ENCODE measurements at regions of chr16 and their contacts with region 1.

Region 1: GRCh38 chr16:10918294-10919002 is 23.8 kb downstream of the DEXI start:
- DNase-seq: peak; percentile 94
- H3K4me3 Mint-ChIP-seq: no peak overlapping the region
- H3K27ac Mint-ChIP-seq: no peak overlapping the region
- H3K4me1 Mint-ChIP-seq: peaks cover 11% of the 10 kb centered on the region
- H3K27me3 Mint-ChIP-seq: no peaks in the 10 kb centered on the region

Region 2: GRCh38 chr16:10509534-10510025 is 408.9 kb before region 1 on chr16:
- CTCF ChIA-PET with region 1: interaction called, 5 read pairs
- intact Hi-C with region 1: loop called (anchors 1 kb)
- DNase-seq: peak; percentile 78
- H3K4me3 Mint-ChIP-seq: no peak overlapping the region
- H3K27ac Mint-ChIP-seq: no peak overlapping the region
- H3K4me1 Mint-ChIP-seq: peaks cover 15% of the 10 kb centered on the region
- H3K27me3 Mint-ChIP-seq: no peaks in the 10 kb centered on the region

Region 3: GRCh38 chr16:10668322-10669045 is 250.0 kb before region 1 on chr16:
- CTCF ChIA-PET with region 1: no interaction called
- intact Hi-C with region 1: loop called (anchors 1 kb)
- DNase-seq: peak; percentile 20
- H3K4me3 Mint-ChIP-seq: no peak overlapping the region
- H3K27ac Mint-ChIP-seq: no peak overlapping the region
- H3K4me1 Mint-ChIP-seq: no peaks in the 10 kb centered on the region
- H3K27me3 Mint-ChIP-seq: no peaks in the 10 kb centered on the region

Region 4: GRCh38 chr16:10743610-10744393 is 174.6 kb before region 1 on chr16 and contains the start of gene NUBP1:
- CTCF ChIA-PET with region 1: interaction called, 11 read pairs
- intact Hi-C with region 1: loop called (anchors 2 kb)
- DNase-seq: peak; percentile 100
- H3K4me3 Mint-ChIP-seq: peak within 1 kb of the TSS; percentile 90
- H3K27ac Mint-ChIP-seq: peak within 1 kb of the TSS; percentile 100
- H3K4me1 Mint-ChIP-seq: peaks cover 26% of the 10 kb centered on the region
- H3K27me3 Mint-ChIP-seq: no peaks in the 10 kb centered on the region
- total RNA-seq, gene NUBP1: 22.3 to 23.0 TPM

Region 5: GRCh38 chr16:10937068-10937859 is 18.8 kb after region 1 on chr16:
- CTCF ChIA-PET with region 1: interaction called, 10 read pairs
- intact Hi-C with region 1: no loop called
- DNase-seq: no peak
- H3K4me3 Mint-ChIP-seq: peak overlapping the region; percentile 95
- H3K27ac Mint-ChIP-seq: no peak overlapping the region
- H3K4me1 Mint-ChIP-seq: peaks cover 73% of the 10 kb centered on the region
- H3K27me3 Mint-ChIP-seq: no peaks in the 10 kb centered on the region

Region 6: DNA sequence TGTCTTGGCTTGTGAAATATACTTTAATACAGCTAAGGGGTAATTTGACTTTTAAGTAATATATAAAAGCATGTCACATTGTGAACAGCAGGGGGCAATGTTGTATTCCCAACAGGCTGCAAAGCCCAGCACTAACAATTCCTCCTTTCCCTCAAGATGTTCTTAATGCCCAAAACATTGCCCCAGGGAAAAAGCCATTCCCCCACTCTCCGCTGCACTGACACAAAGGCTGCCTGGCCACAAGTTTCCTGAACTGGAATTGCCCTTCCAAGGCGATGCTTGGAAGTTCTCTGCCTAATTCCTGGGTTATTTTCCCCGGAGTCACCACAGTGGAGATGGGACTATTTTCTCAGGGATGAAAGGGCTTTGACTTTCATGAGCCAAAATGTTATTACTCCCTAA is 53.1 kb after region 1 on chr16:
- CTCF ChIA-PET with region 1: no interaction called
- intact Hi-C with region 1: no loop called
- DNase-seq: peak; percentile 62
- H3K4me3 Mint-ChIP-seq: no peak overlapping the region
- H3K27ac Mint-ChIP-seq: no peak overlapping the region
- H3K4me1 Mint-ChIP-seq: peaks cover 22% of the 10 kb centered on the region
- H3K27me3 Mint-ChIP-seq: no peaks in the 10 kb centered on the region